Endothelial cell of umbilical vein (primary cell): ENCODE measurements at regions of chr12 and their contacts with region 1.

Region 1: GRCh38 chr12:132024758-132025157 is 75.0 kb downstream of the EP400 start:
- DNase-seq: no peak
- H3K4me3 ChIP-seq: no peak overlapping the region
- H3K27ac ChIP-seq: no peak overlapping the region
- H3K4me1 ChIP-seq: peaks cover 2% of the 10 kb centered on the region
- H3K27me3 ChIP-seq: no peaks in the 10 kb centered on the region
- CTCF ChIP-seq: no peak
- POLR2A ChIP-seq: no peak

Region 2: GRCh38 chr12:131963381-131963780 is 61.4 kb before region 1 on chr12:
- CTCF ChIA-PET with region 1: no interaction called
- POLR2A ChIA-PET with region 1: interaction called, 18 read pairs
- dilution Hi-C with region 1: no loop called
- intact Hi-C with region 1: no loop called
- DNase-seq: no peak
- H3K4me3 ChIP-seq: no peak overlapping the region
- H3K27ac ChIP-seq: no peak overlapping the region
- H3K4me1 ChIP-seq: no peaks in the 10 kb centered on the region
- H3K27me3 ChIP-seq: no peaks in the 10 kb centered on the region
- CTCF ChIP-seq: no peak
- POLR2A ChIP-seq: no peak

Region 3: GRCh38 chr12:132071040-132071810 is 46.5 kb after region 1 on chr12:
- CTCF ChIA-PET with region 1: no interaction called
- POLR2A ChIA-PET with region 1: no interaction called
- dilution Hi-C with region 1: no loop called
- intact Hi-C with region 1: no loop called
- DNase-seq: no peak
- H3K4me3 ChIP-seq: no peak overlapping the region
- H3K27ac ChIP-seq: no peak overlapping the region
- H3K4me1 ChIP-seq: no peaks in the 10 kb centered on the region
- H3K27me3 ChIP-seq: no peaks in the 10 kb centered on the region
- CTCF ChIP-seq: no peak
- POLR2A ChIP-seq: no peak